ENCODE measurements at regions of chr10 and their contacts with region 1.

Region 1: GRCh38 chr10:110497438-110498086 is at the start of gene DUSP5:
- DNase-seq: peak; percentile 82 to 91
- H3K4me3 ChIP-seq: peak within 1 kb of the TSS; percentile 98
- H3K27ac ChIP-seq: peak within 1 kb of the TSS; percentile 87
- H3K4me1 ChIP-seq: peaks cover 24% of the 10 kb centered on the region
- H3K27me3 ChIP-seq: no peaks in the 10 kb centered on the region
- CTCF ChIP-seq: no peak
- total RNA-seq, gene DUSP5: 14.2 and 19.0 TPM in 2 replicates

Region 2: DNA sequence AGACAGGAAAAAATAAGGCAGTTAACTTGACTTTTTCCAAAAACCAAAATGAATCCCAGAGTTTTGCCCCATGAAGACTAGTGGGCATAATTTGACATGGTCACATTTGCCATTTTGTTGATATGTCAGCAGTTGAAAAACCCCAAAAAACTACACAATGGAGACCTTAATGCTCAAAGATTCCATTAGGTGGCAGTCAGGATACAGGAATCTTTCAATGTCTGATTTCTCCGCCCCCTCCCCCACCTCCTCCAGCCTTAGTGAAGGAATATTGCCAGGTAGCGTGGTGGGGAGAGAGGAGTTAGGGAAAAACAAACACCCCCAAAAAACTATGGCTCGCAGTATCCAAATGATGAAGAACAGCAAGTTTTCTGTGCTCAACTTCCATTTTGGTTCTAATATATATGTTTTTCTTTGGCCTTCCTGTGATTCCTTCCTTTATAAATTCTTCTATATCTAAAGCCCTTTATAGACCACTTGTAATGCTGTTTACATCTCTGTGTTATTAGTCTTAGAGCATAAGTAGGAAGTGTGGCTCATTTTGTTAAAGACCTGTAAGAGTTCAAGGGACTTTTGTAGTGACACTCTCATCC is 186.1 kb before region 1 on chr10:
- CTCF ChIA-PET with region 1: no interaction called
- POLR2A ChIA-PET with region 1: no interaction called
- intact Hi-C with region 1: loop called (anchors 1 kb)
- DNase-seq: peak; percentile 23 to 47
- H3K4me3 ChIP-seq: no peak overlapping the region
- H3K27ac ChIP-seq: peak overlapping the region; percentile 45
- H3K4me1 ChIP-seq: peaks cover 27% of the 10 kb centered on the region
- H3K27me3 ChIP-seq: no peaks in the 10 kb centered on the region
- CTCF ChIP-seq: peak; percentile 76

Region 3: DNA sequence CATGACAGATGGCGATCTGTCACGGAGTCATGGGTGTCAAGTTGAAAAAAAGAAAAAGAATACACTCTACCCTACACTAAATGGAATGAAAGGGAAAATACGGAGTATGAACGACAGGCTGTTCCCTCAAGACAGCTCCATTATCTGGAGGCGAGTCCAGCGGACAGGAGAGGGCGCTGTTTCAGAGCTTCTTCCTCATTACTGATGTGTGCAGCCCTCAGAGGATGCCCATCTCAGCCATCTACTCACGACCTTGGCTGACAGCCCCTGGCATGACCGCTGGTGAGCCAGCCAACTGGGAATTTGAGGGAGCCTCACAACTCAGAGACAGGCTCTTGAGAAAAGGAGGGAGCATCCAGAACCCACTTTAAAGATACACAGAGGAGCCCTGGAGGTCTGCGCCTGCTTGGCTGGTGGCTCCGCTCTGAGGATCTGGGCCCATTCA is 143.2 kb before region 1 on chr10:
- CTCF ChIA-PET with region 1: interaction called, 3 read pairs
- POLR2A ChIA-PET with region 1: no interaction called
- intact Hi-C with region 1: loop called (anchors 1 kb)
- DNase-seq: peak; percentile 61 to 62
- H3K4me3 ChIP-seq: no peak overlapping the region; the same call in 1 of the 2 replicates
- H3K27ac ChIP-seq: peak overlapping the region; percentile 95
- H3K4me1 ChIP-seq: peaks cover 70% of the 10 kb centered on the region
- H3K27me3 ChIP-seq: no peaks in the 10 kb centered on the region
- CTCF ChIP-seq: peak; percentile 71

Region 4: GRCh38 chr10:110460111-110460809 is 37.3 kb before region 1 on chr10:
- CTCF ChIA-PET with region 1: no interaction called
- POLR2A ChIA-PET with region 1: interaction called, 6 read pairs
- intact Hi-C with region 1: loop called (anchors 2 kb)
- DNase-seq: peak; percentile 69 to 90
- H3K4me3 ChIP-seq: peak overlapping the region; percentile 32; the same call in 1 of the 2 replicates
- H3K27ac ChIP-seq: peak overlapping the region; percentile 87
- H3K4me1 ChIP-seq: peaks cover 66% of the 10 kb centered on the region
- H3K27me3 ChIP-seq: no peaks in the 10 kb centered on the region
- CTCF ChIP-seq: no peak

Region 5: DNA sequence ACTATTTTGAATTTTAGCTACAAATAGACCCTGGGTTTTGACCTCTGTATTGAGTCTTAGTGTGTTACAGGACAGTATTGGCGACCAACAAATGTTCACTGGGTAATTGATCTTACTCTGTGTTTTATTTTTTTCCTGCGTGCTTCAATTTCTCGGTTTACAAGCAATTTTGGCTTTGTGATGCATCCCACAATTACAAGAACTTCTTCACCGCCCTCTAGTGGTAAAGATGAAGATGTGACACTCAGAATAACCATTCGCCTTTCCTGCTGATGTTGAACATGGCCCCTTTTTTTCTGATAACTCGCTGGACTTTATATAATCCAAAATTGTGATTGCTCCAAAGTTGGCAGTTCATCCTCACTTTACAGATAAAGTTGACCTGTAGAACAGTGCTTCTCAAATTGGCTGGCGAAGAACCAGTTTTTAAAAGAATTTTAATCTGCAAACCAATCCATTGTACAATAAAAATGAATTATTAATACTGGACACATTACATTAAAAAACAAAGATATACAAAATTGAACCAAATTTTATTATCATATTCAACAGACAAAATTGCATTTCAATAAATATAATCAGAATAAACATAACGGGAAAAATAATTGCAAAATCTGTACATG is 49.7 kb after region 1 on chr10:
- CTCF ChIA-PET with region 1: no interaction called
- POLR2A ChIA-PET with region 1: no interaction called
- intact Hi-C with region 1: loop called (anchors 2 kb)
- DNase-seq: no peak
- H3K4me3 ChIP-seq: no peak overlapping the region
- H3K27ac ChIP-seq: no peak overlapping the region
- H3K4me1 ChIP-seq: no peaks in the 10 kb centered on the region
- H3K27me3 ChIP-seq: no peaks in the 10 kb centered on the region
- CTCF ChIP-seq: peak; percentile 83